Activated CD4-positive, alpha-beta T cell treated with anti-CD3 and anti-CD28 coated beads, Interleukin-2, amount 10 ng/mL, durations not matched to agents 24 days and 14 days (primary cell): ENCODE measurements at regions of chr5 and their contacts with region 1.

Region 1: DNA sequence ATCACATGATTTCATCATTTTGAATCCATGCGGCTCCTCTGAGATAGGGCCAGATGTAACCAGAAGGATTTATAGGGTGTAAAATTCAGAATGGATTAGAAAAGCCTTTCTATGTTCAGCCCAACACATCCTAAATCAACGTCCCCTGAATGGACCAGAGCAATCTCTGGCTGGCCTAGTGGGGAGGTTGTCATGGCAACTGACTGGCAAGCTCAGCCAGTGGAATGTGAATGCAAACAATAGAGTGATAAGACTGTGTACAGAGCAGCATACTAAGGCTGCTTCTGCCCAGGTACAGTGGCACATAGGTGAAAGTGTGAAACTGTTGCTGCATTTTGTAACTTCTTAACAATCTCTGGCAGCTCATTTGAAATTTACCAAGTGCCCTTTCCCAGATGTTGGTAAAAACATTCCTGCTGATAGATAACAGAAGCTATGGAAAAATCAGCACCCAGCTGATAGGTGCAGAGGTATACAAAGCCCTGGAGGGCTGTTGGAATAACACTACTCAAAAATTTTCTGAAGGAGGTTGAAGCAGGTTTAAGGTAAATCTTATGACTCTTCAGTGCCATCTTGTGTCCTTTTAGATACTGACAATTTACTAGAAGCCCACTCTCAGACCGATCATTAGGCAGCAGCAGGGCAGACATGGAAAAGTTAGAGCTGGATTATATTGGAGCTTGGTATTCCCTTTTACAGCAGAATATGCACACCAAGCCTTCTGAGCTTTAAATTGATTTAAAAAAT is 267.2 kb downstream of the RAB3C start:
- DNase-seq: no peak
- H3K4me3 Mint-ChIP-seq: no peak overlapping the region
- H3K27ac Mint-ChIP-seq: no peak overlapping the region
- H3K4me1 Mint-ChIP-seq: no peaks in the 10 kb centered on the region
- H3K27me3 Mint-ChIP-seq: peaks cover 11% of the 10 kb centered on the region

Region 2: GRCh38 chr5:58477760-58478376 is 372.2 kb before region 1 on chr5:
- intact Hi-C with region 1: loop called (anchors 5 kb)
- DNase-seq: no peak
- H3K4me3 Mint-ChIP-seq: no peak overlapping the region
- H3K27ac Mint-ChIP-seq: no peak overlapping the region
- H3K4me1 Mint-ChIP-seq: peaks cover 2% of the 10 kb centered on the region
- H3K27me3 Mint-ChIP-seq: no peaks in the 10 kb centered on the region

Region 3: GRCh38 chr5:58498340-58498942 is 351.7 kb before region 1 on chr5:
- intact Hi-C with region 1: loop called (anchors 2 kb)
- DNase-seq: no peak
- H3K4me3 Mint-ChIP-seq: no peak overlapping the region
- H3K27ac Mint-ChIP-seq: no peak overlapping the region
- H3K4me1 Mint-ChIP-seq: peaks cover 8% of the 10 kb centered on the region
- H3K27me3 Mint-ChIP-seq: peaks cover 2% of the 10 kb centered on the region